ENCODE measurements at regions of chr14 and their contacts with region 1.

Region 1: DNA sequence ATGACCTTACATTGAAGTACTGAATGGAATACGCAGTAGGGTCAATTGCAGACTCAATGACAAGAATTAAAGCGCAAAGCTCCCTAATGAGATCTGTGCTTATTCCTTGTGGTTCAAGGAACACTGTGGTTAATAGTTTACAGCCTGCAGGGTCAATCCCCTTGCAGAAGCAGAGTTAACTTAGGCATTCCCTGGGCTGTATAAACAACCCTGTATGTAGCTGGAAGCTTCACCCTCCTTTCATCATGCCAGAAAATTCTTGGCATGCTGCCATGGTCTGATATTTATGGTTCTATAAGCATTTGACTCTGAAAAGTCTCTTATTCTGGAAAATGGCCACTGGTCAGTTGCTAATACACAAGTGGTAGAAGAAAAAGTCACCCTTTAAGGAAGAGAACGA is 227.7 kb downstream of the NOVA1 start:
- DNase-seq: no peak
- H3K4me3 ChIP-seq: no peak overlapping the region
- H3K27ac ChIP-seq: no peak overlapping the region
- H3K27me3 ChIP-seq: no peaks in the 10 kb centered on the region
- CTCF ChIP-seq: no peak

Region 2: DNA sequence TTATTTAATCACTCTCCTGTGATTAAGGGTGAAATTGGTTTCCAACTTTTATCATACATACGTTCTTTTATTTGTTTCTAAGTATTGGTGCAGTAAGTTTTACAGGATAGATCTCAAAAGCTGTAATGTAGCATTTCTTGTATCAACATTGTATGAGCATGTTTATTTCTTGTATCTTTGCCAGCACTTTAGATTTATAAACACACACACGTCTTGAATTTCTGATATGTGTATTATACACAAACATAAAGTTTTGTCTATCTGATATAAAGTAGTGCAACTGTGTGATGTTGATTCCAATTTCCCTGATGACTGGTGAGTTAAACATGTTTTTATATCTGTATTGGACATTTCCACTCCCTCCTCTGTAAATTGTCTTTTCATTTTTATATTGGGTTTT is 93.0 kb after region 1 on chr14:
- CTCF ChIA-PET with region 1: interaction called, 11 read pairs
- POLR2A ChIA-PET with region 1: no interaction called
- DNase-seq: no peak
- H3K4me3 ChIP-seq: no peak overlapping the region
- H3K27ac ChIP-seq: no peak overlapping the region
- H3K27me3 ChIP-seq: no peaks in the 10 kb centered on the region
- CTCF ChIP-seq: no peak

Region 3: DNA sequence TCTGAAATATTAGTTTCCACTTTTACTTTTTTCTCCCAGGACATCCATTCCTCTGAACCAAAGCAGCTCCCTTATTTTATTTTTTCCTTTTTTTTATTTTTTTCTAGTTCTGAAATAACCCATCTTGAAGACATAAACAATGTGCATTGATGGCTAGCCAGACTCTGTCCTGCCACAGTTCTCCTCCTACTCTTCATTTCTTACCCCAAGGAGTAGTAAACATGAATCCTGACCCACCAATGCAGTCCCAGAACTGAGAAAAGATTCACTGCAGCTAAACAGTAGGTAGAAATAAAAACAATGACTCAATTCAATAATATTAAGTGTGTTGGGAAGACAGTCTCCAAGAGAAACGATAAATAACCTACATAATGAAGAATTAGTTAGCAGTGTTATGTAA is 293.4 kb after region 1 on chr14:
- CTCF ChIA-PET with region 1: no interaction called
- POLR2A ChIA-PET with region 1: no interaction called
- DNase-seq: no peak
- H3K4me3 ChIP-seq: no peak overlapping the region
- H3K27ac ChIP-seq: no peak overlapping the region
- H3K27me3 ChIP-seq: no peaks in the 10 kb centered on the region
- CTCF ChIP-seq: no peak

Region 4: DNA sequence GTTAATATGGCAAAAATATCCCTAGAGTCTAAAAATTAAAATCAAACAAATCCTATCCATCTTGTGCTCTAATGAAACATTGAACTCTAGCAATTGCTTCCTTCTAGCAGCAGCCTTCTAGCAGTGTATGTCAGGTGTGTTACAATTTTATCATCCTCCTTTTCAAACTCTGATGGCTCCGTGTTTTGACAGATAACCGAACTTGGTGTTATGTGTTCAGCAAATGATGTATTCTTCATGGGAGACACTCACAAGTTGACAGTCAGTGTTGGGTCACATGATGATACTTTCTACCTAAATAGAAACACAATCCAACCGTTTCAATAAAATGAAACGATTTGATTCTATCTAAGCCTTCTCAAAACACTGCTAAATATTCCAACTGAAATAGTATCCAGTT is 753.0 kb after region 1 on chr14:
- CTCF ChIA-PET with region 1: no interaction called
- POLR2A ChIA-PET with region 1: no interaction called
- DNase-seq: no peak
- H3K4me3 ChIP-seq: no peak overlapping the region
- H3K27ac ChIP-seq: no peak overlapping the region
- H3K27me3 ChIP-seq: no peaks in the 10 kb centered on the region
- CTCF ChIP-seq: no peak

Measured in AG04450 (cell line).